IMR-90 (cell line): ENCODE measurements at regions of chr2 and their contacts with region 1.

Region 1: DNA sequence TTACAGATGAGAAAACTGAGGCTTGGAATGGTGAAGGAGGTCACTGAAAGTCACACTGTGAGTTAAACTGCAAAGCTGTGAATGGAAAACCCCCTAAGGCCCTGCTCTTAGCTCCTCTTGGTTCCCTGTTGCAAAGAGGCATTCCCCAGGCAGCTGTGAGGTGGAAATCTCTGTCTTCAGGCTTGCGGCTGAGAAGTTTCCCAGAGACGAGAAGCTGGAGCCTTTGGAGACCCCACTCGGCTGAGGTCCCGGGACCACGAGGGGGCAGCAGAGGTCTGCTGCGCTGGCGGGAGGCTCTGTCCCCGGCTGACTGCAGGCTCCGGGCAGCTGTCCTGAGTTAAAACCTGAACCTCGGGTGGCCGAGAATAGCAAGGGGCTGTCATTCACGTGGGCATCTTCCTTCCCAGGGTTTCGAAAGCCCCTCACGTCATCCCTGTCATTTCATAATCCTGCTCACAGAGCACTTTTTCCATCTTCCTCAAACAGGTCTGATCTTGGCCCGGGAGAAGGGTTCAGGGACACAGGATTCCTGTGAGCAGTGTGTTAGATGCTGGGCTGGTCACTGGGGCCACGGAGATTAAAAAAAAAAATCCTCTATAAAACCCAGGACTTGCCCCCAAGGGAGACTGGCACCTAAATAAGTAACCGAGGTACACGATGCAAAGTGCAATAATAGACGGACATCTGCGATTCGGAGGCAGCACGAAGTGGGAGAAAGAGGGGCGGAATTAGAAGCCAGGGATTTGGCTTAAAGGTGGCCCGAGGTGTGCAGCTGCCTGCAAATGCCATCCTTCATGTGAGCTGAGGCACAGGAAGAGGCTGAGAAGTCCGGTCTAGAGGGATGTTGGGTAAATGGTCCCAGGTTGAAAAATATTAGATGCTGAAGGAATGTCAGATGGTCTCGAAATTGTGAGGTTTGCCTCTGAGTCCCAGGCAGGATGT is 24.6 kb upstream of the ATOH8 start:
- DNase-seq: peak; percentile 72
- ATAC-seq: peak; percentile 98
- H3K4me3 ChIP-seq: no peak overlapping the region
- H3K27ac ChIP-seq: no peak overlapping the region
- H3K4me1 ChIP-seq: peaks cover 5% of the 10 kb centered on the region
- H3K27me3 ChIP-seq: no peaks in the 10 kb centered on the region
- CTCF ChIP-seq: peak; percentile 99
- POLR2A ChIP-seq: peak; percentile 43; the same call in 1 of the 2 replicates
- RAD21 ChIP-seq: peak; percentile 100

Region 2: DNA sequence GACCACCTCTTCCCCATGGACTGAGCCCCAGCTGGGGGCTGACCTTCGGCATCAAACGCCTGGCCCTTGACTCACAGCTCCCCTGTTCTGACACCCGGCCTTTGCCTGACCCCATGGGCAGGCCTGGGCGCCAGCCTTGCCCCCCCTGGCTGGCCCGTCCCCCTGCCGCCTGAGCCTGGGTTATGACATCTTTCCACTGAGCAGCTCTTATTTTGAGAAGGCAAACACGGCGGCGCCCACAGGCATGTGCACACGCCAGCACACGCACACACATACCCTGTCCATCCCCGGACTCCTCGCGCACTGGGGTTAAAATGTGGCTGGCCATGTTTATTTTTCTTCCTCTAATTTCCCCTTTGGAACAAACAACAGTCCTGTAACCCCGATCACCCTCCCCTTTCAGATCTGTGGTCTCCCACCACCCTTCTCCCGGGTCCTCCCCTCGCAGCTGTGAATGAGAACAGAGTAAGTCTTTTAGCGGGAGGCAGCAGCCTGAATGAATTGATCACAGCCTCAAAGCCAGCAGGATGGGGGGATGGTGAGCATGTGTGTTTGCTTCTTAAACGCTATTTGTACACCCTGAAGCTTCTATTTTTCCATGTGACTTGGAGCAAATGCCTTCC is 12.8 kb after region 1 on chr2:
- CTCF ChIA-PET with region 1: interaction called, 10 read pairs
- POLR2A ChIA-PET with region 1: interaction called, 4 read pairs
- dilution Hi-C with region 1: no loop called
- in situ Hi-C with region 1: no loop called
- intact Hi-C with region 1: no loop called
- DNase-seq: peak; percentile 96
- ATAC-seq: peak; percentile 78
- H3K4me3 ChIP-seq: no peak overlapping the region
- H3K27ac ChIP-seq: peak overlapping the region; percentile 90
- H3K4me1 ChIP-seq: peaks cover 46% of the 10 kb centered on the region
- H3K27me3 ChIP-seq: no peaks in the 10 kb centered on the region
- CTCF ChIP-seq: no peak
- POLR2A ChIP-seq: no peak; the same call in 1 of the 2 replicates
- RAD21 ChIP-seq: no peak